Heart left ventricle (tissue), 16 donors: ENCODE measurements at regions of chr17 and their contacts with region 1.

Region 1: DNA sequence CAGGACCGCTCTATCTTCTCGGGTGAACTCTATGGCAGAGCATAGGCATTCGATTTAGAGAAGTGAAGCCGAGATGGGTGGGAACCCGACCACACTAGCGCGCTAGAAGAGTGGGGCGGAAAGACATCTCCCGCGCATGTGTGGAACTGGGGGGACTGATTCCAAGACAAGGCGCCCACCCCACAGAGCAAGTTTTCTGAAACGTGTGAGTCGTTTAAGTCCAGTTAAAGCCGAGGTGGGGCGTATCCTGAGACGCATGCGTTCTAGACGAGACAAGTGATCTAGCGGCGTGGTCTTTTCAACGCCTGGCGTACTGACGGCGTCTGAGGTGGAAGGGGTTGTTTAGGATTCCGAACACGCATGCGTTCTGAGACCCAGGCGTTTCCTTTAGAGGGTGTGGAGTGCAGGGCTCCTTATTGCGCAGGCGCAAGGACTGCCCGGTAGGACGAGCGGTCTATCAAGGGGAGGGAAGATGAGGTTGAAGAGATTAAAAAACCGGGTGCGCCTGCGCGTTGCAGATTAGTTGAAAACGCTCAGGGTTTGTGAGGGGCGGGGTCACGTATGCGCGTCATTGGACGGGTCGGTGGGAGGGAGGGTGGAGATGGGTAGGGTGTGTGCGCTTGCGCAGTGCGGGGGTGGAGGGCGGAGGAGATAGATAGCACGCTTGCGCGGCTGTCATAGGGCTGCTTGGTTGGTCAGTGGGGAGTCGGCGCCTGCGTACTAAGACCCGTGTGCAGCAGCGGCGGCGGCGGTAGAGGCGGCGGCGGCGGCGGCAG is at the start of gene EIF5A:
- DNase-seq: peak; percentile 100
- ATAC-seq: peak; percentile 91 to 97 (median 95)
- H3K4me3 ChIP-seq: peak within 1 kb of the TSS; percentile 69 to 98 (median 92)
- H3K27ac ChIP-seq: peak within 1 kb of the TSS; percentile 85 to 100 (median 97)
- H3K4me1 ChIP-seq: peaks cover 4 to 39% (median 28%) of the 10 kb centered on the region in 12 donors
- H3K27me3 ChIP-seq: no peaks in the 10 kb centered on the region
- CTCF ChIP-seq: no peak
- POLR2A ChIP-seq: peak in 1 of 2 donors; percentile 78
- total RNA-seq, gene EIF5A: 120 to 500 (median 257) TPM

Region 2: GRCh38 chr17:7045909-7046724 is 261.0 kb before region 1 on chr17:
- intact Hi-C with region 1: loop called in 1 of 10 experiments (anchors 5 kb)
- DNase-seq: no peak
- ATAC-seq: peak in 2 of 4 donors; percentile 31 to 48
- H3K4me3 ChIP-seq: peak overlapping the region in 9 of 12 donors; percentile 22 to 46 (median 26)
- H3K27ac ChIP-seq: peak overlapping the region in 2 of 12 donors; percentile 24 to 68
- H3K4me1 ChIP-seq: peaks cover 0 to 41% (median 28%) of the 10 kb centered on the region in 12 donors
- H3K27me3 ChIP-seq: peaks cover 0 to 43% (median 21%) of the 10 kb centered on the region in 9 donors
- CTCF ChIP-seq: peak; percentile 65 to 89 (median 80)
- POLR2A ChIP-seq: no peak

Region 3: DNA sequence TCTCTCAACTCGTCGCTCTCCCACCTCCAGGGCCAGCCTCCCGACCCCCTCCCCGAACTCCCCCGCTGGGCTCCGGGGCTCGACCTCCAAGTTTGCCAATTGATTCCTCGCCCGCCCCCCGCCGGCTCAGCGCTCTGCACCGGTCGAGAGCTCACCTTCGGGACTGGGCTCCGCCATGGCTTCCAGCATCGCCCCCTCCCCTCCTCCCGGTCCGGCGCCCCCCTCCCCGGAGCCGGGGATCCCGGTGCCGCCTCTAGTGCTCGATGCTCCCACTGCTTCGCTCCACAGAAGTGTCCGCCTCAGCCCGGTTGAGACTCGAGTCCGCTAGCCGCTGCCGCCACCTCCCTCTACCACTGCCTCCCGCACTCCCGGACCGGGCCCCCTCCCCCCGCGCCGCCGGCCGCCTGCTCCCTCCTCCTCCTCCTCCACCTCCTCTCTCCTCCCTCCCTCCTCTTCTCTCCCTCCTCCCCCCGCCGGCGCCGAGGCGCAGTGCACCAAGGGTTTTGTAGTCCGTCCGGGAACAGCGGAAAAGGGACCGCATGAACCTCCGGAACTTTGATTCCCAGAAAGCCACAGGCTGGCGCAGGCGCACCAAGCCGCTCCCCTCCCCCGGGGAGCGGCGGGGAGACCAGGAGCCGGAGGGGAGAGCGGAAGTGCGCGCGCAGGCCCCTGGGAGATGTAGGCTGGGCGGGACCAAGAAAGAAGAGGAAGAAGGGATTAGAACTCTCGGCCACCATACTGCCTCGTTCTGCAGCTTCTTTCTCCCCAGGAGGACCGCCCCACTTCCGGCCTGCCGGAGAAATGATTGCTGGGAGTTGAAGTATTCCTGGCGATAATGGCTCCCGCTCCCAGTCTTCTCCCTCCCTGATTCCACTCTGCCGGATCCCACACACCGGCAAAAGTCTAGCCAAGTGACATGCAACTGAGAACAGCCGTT is 67.7 kb before region 1 on chr17 and contains the start of gene PHF23:
- intact Hi-C with region 1: loop called in 1 of 10 experiments (anchors 1 kb)
- DNase-seq: peak; percentile 99 to 100 (median 99)
- ATAC-seq: peak; percentile 79 to 86 (median 84)
- H3K4me3 ChIP-seq: peak within 1 kb of the TSS; percentile 66 to 98 (median 90)
- H3K27ac ChIP-seq: peak within 1 kb of the TSS; percentile 81 to 98 (median 94)
- H3K4me1 ChIP-seq: peaks cover 5 to 58% (median 40%) of the 10 kb centered on the region in 12 donors
- H3K27me3 ChIP-seq: no peaks in the 10 kb centered on the region
- CTCF ChIP-seq: peak in 1 of 12 donors; percentile 9
- POLR2A ChIP-seq: peak in 1 of 2 donors; percentile 56
- total RNA-seq, gene PHF23: 19.1 to 36.7 (median 23.0) TPM

Region 4: DNA sequence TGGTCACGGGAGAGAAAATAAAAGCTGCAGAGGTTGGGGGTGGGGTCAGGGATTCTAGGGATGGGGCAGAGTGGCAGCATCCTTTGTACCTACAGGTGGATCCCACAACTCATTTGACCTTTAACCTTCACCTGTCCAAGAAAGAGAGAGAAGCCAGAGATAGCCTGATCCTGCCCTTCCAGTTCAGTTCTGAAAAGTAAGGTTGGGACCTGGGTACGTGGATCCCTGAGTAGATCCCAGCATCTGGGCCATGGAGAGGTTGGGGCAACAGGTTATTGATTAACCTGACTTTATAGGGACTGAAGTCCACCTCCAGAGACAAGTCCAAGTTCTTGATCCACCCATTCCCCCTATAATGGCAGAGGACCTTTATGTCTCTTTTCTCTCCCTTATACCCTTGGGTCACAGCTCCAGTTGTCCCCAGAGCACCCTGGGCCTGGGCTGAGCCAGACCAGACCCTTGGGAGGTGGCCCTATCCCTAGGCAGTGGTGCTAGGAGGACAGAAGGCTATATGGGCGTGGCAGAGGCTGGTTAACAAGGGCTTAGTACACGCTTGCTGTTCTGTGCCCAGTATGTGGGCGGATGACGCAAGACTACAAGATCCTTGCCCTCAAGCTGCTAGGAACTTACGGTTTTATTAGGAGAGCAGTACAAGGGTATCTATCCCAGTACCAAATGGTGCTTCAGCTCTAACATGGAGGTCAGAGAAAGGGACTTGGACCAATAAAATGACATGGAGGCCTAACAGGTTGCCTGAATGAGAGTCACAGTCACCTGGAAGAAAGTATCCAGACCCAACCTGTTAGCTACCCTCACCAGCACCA is 48.2 kb before region 1 on chr17:
- intact Hi-C with region 1: loop called in 2 of 10 experiments (anchors 5 kb)
- DNase-seq: no peak
- ATAC-seq: no peak
- H3K4me3 ChIP-seq: no peak overlapping the region
- H3K27ac ChIP-seq: no peak overlapping the region
- H3K4me1 ChIP-seq: peaks cover 0 to 37% (median 25%) of the 10 kb centered on the region in 12 donors
- H3K27me3 ChIP-seq: peaks cover 18 to 35% (median 30%) of the 10 kb centered on the region in 9 donors
- CTCF ChIP-seq: no peak
- POLR2A ChIP-seq: no peak

Region 5: GRCh38 chr17:7329374-7329996 is 22.4 kb after region 1 on chr17:
- intact Hi-C with region 1: loop called in 1 of 10 experiments (anchors 2 kb)
- DNase-seq: peak; percentile 98 to 100 (median 99)
- ATAC-seq: peak; percentile 89 to 92 (median 91)
- H3K4me3 ChIP-seq: peak overlapping the region; percentile 67 to 95 (median 90)
- H3K27ac ChIP-seq: peak overlapping the region; percentile 81 to 97 (median 90)
- H3K4me1 ChIP-seq: peaks cover 0 to 24% (median 16%) of the 10 kb centered on the region in 12 donors
- H3K27me3 ChIP-seq: peaks cover 0 to 7% (median 0%) of the 10 kb centered on the region in 9 donors
- CTCF ChIP-seq: peak in 3 of 12 donors; percentile 14 to 35 (median 35)
- POLR2A ChIP-seq: peak in 1 of 2 donors; percentile 62